Activated CD8-positive, alpha-beta T cell treated with anti-CD3 and anti-CD28 coated beads, Interleukin-2, amount 10 ng/mL, durations not matched to agents 7 days and 5 days (primary cell): ENCODE measurements at regions of chr2 and their contacts with region 1.

Region 1: DNA sequence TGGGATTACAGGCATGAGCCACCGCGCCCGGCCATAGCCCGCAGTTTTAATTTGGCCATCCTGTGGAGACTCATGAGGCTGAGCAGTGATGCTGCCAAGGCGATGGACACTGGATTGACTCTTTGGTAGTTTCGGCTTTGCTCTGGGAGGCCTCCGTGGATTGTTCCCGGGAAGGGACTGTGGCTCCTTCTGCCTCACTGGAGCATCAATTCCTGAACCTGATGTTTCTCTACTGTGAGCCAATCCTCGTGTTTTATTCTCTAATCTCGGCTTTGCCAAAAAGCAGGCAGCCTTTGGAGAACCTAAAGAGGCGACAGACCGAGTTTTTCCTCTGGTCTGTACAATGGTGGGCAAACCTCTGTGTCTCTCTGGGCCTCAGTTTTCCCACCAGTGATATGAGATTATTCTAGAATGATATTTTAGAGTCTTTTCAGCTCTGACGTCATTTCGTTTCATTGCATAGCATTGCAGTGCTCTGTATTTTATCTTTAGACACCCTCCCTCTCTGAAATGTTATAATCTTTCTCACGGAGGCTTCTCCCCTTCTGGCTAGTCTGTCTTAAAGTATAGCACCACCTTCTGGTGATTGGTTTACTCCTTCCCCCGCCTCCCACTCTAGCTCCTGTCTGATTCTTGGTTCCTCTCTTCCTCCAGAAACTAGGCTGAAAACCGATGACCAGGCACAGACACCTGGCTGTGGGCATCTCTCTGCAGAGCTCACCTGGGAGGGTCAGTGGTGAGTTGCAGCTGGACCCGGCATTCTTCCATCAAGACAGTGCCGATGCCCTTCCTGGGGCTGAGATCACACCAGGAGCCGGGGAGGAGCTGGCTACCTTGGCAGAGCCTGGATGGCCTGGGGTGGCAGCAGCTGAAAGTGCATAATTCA is 341.3 kb downstream of the MYCN start:
- DNase-seq: no peak
- ATAC-seq: no peak
- H3K4me3 Mint-ChIP-seq: no peak overlapping the region
- H3K27ac Mint-ChIP-seq: no peak overlapping the region
- H3K4me1 Mint-ChIP-seq: no peaks in the 10 kb centered on the region
- H3K27me3 Mint-ChIP-seq: no peaks in the 10 kb centered on the region

Region 2: GRCh38 chr2:15939854-15940660 is 341.6 kb before region 1 on chr2 and contains the start of gene MYCN:
- CTCF ChIA-PET with region 1: interaction called, 24 read pairs
- POLR2A ChIA-PET with region 1: no interaction called
- DNase-seq: peak; percentile 59
- ATAC-seq: peak; percentile 47
- H3K4me3 Mint-ChIP-seq: peak within 1 kb of the TSS; percentile 48
- H3K27ac Mint-ChIP-seq: no peak within 1 kb of the TSS
- H3K4me1 Mint-ChIP-seq: peaks cover 29% of the 10 kb centered on the region
- H3K27me3 Mint-ChIP-seq: peaks cover 47% of the 10 kb centered on the region
- total RNA-seq, gene MYCN: not detected